H1 (cell line): ENCODE measurements at regions of chr4 and their contacts with region 1.

Region 1: DNA sequence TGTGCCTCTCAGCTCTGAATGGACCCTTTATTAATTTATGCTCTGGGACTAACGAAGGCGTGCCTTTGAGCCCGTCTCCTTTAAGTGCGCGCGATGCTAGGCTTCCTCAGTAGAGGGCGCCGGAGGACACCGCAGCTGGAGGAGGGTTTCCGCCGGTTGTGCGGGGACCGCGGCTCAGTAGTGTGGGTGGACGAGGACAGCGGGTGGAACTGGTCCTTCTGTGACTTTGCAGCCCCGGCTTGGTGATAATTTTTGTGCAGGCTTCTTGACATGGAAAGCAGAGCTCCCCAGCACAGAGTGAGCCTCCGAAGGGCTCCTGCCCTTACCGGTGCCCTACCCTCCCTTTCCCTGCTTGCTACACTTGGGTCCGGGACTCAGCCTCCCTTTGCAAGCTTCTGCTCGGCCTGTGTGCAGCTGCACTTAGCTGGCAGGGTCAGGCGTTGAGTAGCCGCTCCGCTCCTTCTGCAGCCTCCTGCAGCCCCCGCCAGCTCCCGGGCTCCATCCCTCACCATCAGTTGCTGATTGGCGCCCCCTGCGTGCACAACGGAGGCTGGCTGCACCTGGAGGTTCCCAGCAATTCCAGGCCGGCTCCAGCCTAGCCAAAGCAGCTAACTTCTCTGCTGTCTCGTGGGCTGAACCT is 26.8 kb upstream of the BOD1L1 start:
- DNase-seq: peak; percentile 62 to 93
- H3K4me3 ChIP-seq: peak overlapping the region; percentile 34 to 72 (median 64)
- H3K27ac ChIP-seq: no peak overlapping the region
- H3K4me1 ChIP-seq: no peaks in the 10 kb centered on the region; a peak in 1 of 7 replicates
- H3K27me3 ChIP-seq: no peaks in the 10 kb centered on the region
- CTCF ChIP-seq: peak; percentile 79 to 89 (median 84)
- EP300 ChIP-seq: no peak
- POLR2A ChIP-seq: no peak
- RAD21 ChIP-seq: peak; percentile 65 to 76

Region 2: DNA sequence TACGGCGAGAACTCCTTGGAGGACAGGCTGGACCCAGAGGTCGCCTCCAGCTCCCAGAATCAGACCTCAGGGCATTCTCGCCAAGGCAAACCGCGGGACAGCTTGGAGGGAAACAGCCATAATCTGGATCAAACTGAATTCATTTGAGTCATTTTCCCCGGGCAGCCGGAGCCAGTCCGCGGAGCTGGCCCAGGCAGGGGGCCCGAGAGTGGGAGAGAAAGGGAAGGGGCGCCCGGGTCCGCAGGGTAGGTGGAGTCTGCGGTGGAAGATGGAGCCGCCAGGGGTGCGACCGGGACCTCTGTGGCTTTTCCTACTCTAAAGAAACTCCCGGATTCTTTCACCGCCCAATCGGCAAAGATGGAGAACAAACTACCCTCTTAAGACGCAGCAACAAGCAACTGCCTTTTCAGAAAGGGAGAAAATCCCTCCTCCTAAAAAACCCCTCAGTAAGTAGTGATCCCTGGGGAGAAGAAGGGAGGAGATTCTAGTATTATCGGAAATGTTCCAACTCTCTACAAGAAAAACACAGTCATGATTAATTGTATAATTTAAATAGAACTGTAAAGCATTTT is 115.1 kb before region 1 on chr4:
- CTCF ChIA-PET with region 1: no interaction called
- POLR2A ChIA-PET with region 1: no interaction called
- DNase-seq: peak in 1 of 2 experiments; percentile 56
- H3K4me3 ChIP-seq: peak overlapping the region in 1 of 4 experiments; percentile 31; a peak in 1 of 8 replicates
- H3K27ac ChIP-seq: no peak overlapping the region
- H3K4me1 ChIP-seq: peaks cover 5 to 31% (median 19%) of the 10 kb centered on the region in 4 experiments
- H3K27me3 ChIP-seq: peaks cover 96 to 100% (median 100%) of the 10 kb centered on the region in 4 experiments
- CTCF ChIP-seq: no peak
- EP300 ChIP-seq: no peak
- POLR2A ChIP-seq: no peak
- RAD21 ChIP-seq: no peak

Region 3: DNA sequence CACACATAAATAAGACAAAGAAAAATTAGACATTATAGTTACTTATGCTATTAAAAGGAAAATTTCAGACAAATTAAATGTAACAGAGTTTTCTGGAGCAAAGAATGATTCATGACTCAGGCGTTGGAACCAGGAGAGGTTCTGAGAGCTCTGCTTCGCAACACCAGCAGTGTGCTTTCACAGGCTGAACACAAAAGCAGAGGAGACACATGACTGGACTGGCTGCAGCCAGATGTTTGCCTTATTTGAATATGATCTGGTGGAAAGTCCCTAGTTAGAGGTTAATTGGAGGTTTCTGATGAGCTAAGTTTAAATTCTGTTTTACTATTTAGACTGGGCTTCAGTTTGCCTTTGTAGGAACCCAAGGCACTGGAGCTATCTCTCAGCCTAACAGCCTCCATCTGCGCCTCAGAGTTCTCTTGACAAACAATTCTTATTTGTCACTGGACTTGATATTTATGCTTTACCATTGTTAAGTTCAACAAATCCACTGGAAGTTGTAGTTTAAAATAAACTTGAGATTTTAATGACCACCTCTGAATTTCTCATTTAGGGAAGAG is 42.9 kb before region 1 on chr4:
- CTCF ChIA-PET with region 1: interaction called, 21 read pairs
- POLR2A ChIA-PET with region 1: no interaction called
- DNase-seq: no peak
- H3K4me3 ChIP-seq: no peak overlapping the region
- H3K27ac ChIP-seq: no peak overlapping the region
- H3K4me1 ChIP-seq: no peaks in the 10 kb centered on the region
- H3K27me3 ChIP-seq: no peaks in the 10 kb centered on the region
- CTCF ChIP-seq: no peak
- EP300 ChIP-seq: no peak
- POLR2A ChIP-seq: no peak
- RAD21 ChIP-seq: no peak

Region 4: DNA sequence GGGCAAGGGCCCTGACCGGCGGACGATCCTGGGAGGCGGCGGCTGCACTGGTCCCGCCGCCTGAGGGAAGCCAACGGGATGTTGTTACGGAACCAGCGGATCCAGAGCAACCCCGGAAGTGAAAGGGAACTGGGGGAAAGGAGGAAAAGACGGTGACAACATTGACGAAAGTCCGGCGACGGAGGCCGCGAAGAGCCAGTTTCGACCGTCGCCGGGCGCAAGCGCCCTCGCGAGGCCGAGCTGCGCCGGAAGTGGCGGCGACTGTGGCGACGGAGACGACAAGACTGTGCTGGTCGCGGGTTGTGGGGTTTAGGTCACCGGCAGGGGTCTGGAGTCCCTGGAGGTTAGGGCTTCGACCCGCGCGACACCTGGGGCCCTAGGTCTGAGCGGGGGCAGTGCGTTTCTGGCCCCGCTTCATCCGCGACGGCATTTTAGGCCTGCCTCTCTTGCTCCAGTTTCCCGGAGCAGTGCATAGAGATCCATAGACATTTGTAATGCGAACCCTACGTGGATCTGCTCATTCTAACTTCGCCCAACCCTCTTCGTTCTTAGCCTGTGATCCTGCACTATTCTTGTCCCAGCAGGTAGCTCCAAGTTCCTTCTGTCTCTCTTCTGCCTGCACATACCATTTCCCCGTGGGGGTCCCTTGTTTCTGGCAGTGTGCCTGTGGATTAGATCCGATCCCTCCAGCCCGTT is 26.5 kb before region 1 on chr4 and contains the start of gene BOD1L1:
- CTCF ChIA-PET with region 1: interaction called, 20 read pairs
- POLR2A ChIA-PET with region 1: interaction called, 3 read pairs
- DNase-seq: peak; percentile 81 to 89
- H3K4me3 ChIP-seq: peak within 1 kb of the TSS; percentile 81 to 96 (median 94)
- H3K27ac ChIP-seq: peak within 1 kb of the TSS; percentile 73
- H3K4me1 ChIP-seq: peaks cover 0 to 4% (median 3%) of the 10 kb centered on the region in 4 experiments; a peak in 3 of 7 replicates
- H3K27me3 ChIP-seq: no peaks in the 10 kb centered on the region
- CTCF ChIP-seq: peak; percentile 35 to 45 (median 43)
- EP300 ChIP-seq: 0 out of 3 replicates have a peak, but pooled peaks of 1 of the 2 experiments have one; percentile 35
- POLR2A ChIP-seq: peak; percentile 72 to 88
- RAD21 ChIP-seq: peak in 1 of 2 experiments; percentile 19; a peak in 2 of 4 replicates
- total RNA-seq, gene BOD1L1: 34.9 and 39.3 TPM in 2 replicates

Region 5: GRCh38 chr4:13670456-13671160 is 16.3 kb after region 1 on chr4:
- CTCF ChIA-PET with region 1: interaction called, 10 read pairs
- POLR2A ChIA-PET with region 1: no interaction called
- DNase-seq: no peak
- H3K4me3 ChIP-seq: no peak overlapping the region
- H3K27ac ChIP-seq: no peak overlapping the region
- H3K4me1 ChIP-seq: no peaks in the 10 kb centered on the region
- H3K27me3 ChIP-seq: no peaks in the 10 kb centered on the region
- CTCF ChIP-seq: no peak
- EP300 ChIP-seq: no peak
- POLR2A ChIP-seq: no peak
- RAD21 ChIP-seq: no peak

Region 6: GRCh38 chr4:13829457-13829856 is 175.2 kb after region 1 on chr4:
- CTCF ChIA-PET with region 1: interaction called, 23 read pairs
- POLR2A ChIA-PET with region 1: interaction called, 4 read pairs
- DNase-seq: no peak
- H3K4me3 ChIP-seq: no peak overlapping the region
- H3K27ac ChIP-seq: no peak overlapping the region
- H3K4me1 ChIP-seq: no peaks in the 10 kb centered on the region
- H3K27me3 ChIP-seq: no peaks in the 10 kb centered on the region
- CTCF ChIP-seq: no peak
- EP300 ChIP-seq: no peak
- POLR2A ChIP-seq: no peak
- RAD21 ChIP-seq: no peak

Region 7: GRCh38 chr4:13907255-13907751 is 253.0 kb after region 1 on chr4:
- CTCF ChIA-PET with region 1: interaction called, 27 read pairs
- POLR2A ChIA-PET with region 1: no interaction called
- DNase-seq: no peak
- H3K4me3 ChIP-seq: no peak overlapping the region
- H3K27ac ChIP-seq: no peak overlapping the region
- H3K4me1 ChIP-seq: no peaks in the 10 kb centered on the region
- H3K27me3 ChIP-seq: no peaks in the 10 kb centered on the region
- CTCF ChIP-seq: no peak
- EP300 ChIP-seq: no peak
- POLR2A ChIP-seq: no peak
- RAD21 ChIP-seq: peak; percentile 19 to 31; a peak in 2 of 4 replicates